ENCODE measurements at regions of chr10 and their contacts with region 1.

Region 1: GRCh38 chr10:60208676-60209269 is 180.9 kb downstream of the ANK3 start:
- DNase-seq: no peak
- H3K4me3 ChIP-seq: no peak overlapping the region
- CTCF ChIP-seq: peak; percentile 65

Region 2: GRCh38 chr10:59625721-59626522 is 582.9 kb before region 1 on chr10:
- CTCF ChIA-PET with region 1: interaction called, 13 read pairs
- POLR2A ChIA-PET with region 1: no interaction called
- DNase-seq: peak; percentile 12
- H3K4me3 ChIP-seq: no peak overlapping the region
- CTCF ChIP-seq: peak; percentile 71

Region 3: GRCh38 chr10:60105295-60105695 is 103.5 kb before region 1 on chr10:
- CTCF ChIA-PET with region 1: interaction called, 415 read pairs
- POLR2A ChIA-PET with region 1: no interaction called
- DNase-seq: no peak
- H3K4me3 ChIP-seq: no peak overlapping the region
- CTCF ChIP-seq: no peak

Region 4: GRCh38 chr10:60172363-60172990 is 36.3 kb before region 1 on chr10:
- CTCF ChIA-PET with region 1: interaction called, 12 read pairs
- POLR2A ChIA-PET with region 1: no interaction called
- DNase-seq: no peak
- H3K4me3 ChIP-seq: no peak overlapping the region
- CTCF ChIP-seq: no peak

Region 5: GRCh38 chr10:60224066-60224705 is 15.4 kb after region 1 on chr10:
- CTCF ChIA-PET with region 1: interaction called, 76 read pairs
- POLR2A ChIA-PET with region 1: no interaction called
- DNase-seq: no peak
- H3K4me3 ChIP-seq: no peak overlapping the region
- CTCF ChIP-seq: no peak

Region 6: GRCh38 chr10:60434418-60435046 is 225.8 kb after region 1 on chr10:
- CTCF ChIA-PET with region 1: interaction called, 346 read pairs
- POLR2A ChIA-PET with region 1: no interaction called
- DNase-seq: no peak
- H3K4me3 ChIP-seq: no peak overlapping the region
- CTCF ChIP-seq: peak; percentile 49